ENCODE measurements at regions of chr1 and their contacts with region 1.

Region 1: DNA sequence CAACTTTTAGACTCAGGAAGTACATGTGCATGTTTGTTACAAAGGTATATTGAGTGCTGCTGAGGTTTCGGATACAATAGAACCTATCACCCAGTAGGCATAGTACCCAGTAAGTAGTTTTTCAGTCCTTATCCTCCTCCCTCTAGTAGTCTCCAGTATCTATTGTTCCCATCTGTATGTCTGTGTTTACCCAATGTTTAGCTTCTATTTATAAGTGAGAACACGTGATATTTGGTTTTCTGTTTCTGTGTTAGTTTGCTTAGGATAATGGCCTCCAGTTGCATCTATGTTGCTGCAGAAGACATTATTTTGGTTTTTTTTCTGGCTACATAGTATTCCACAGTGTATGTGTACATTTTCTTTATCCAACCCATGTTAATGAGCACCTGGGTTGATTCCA is 47.2 kb upstream of the TSNAX start:
- DNase-seq: no peak
- ATAC-seq: no peak
- H3K4me3 ChIP-seq: no peak overlapping the region
- H3K27ac ChIP-seq: no peak overlapping the region
- H3K4me1 ChIP-seq: no peaks in the 10 kb centered on the region
- H3K27me3 ChIP-seq: peaks cover 1 to 3% of the 10 kb centered on the region in 2 experiments; a peak in 3 of 5 replicates
- CTCF ChIP-seq: no peak
- EP300 ChIP-seq: no peak
- POLR2A ChIP-seq: no peak
- RAD21 ChIP-seq: no peak

Region 2: GRCh38 chr1:231584124-231584523 is 102.8 kb after region 1 on chr1:
- CTCF ChIA-PET with region 1: no interaction called
- POLR2A ChIA-PET with region 1: no interaction called
- in situ Hi-C with region 1: no loop called
- intact Hi-C with region 1: loop called (anchors 5 kb)
- DNase-seq: peak in 2 of 4 experiments; percentile 46 to 68
- ATAC-seq: peak; percentile 88
- H3K4me3 ChIP-seq: no peak overlapping the region
- H3K27ac ChIP-seq: no peak overlapping the region
- H3K4me1 ChIP-seq: no peaks in the 10 kb centered on the region; a peak in 1 of 5 replicates
- H3K27me3 ChIP-seq: no peaks in the 10 kb centered on the region
- CTCF ChIP-seq: peak in 2 of 3 experiments; percentile 51 to 73; a peak in 4 of 6 replicates
- EP300 ChIP-seq: 0 out of 2 replicates have a peak, but pooled peaks have one; percentile 11
- POLR2A ChIP-seq: no peak
- RAD21 ChIP-seq: peak; percentile 69 to 93

Measured in K562 (cell line).